BJ (cell line): ENCODE measurements at regions of chr5 and their contacts with region 1.

Region 1: DNA sequence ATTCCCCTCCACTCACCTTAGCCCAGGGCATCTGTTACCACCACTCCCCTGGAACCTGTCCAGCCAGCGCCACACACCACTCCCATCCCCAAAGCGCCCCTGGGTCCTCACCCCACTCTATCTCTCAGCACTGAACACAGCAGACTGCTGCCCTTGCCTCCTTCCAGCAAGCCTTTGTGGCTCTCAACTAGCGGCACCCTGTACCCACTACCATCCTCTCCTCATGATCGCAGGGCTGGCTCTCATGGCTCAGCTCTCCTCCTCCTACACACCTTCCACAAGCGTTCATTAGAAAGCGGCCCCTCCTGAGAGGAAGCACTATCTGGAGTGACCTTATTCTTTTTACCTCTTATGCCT is 13.3 kb upstream of the BASP1 start:
- DNase-seq: no peak
- H3K4me3 ChIP-seq: no peak overlapping the region
- H3K27me3 ChIP-seq: no peaks in the 10 kb centered on the region
- CTCF ChIP-seq: no peak

Region 2: DNA sequence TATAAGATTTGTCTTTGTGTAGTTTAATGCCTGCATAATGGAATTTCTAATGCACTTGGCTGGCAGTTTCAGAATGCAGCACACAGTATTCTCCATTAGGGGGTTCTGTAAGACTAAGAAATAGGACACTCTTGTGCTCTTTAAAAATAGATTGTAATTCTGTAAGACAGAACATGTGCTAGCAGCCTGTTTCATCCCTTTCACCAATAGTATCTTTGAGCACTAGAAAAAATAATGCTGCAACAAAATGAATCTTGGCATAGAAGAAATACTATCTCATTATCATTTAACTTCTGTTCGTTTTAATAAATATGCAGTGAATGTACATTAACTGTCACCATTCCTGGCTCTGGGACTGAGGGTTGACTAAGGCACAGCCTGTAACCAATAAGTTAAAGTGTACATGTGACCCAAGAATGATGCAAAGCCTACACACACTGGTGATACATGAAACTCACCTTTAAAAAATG is 714.8 kb before region 1 on chr5:
- CTCF ChIA-PET with region 1: interaction called, 21 read pairs
- POLR2A ChIA-PET with region 1: no interaction called
- DNase-seq: no peak
- H3K4me3 ChIP-seq: no peak overlapping the region
- H3K27me3 ChIP-seq: peaks cover 2% of the 10 kb centered on the region
- CTCF ChIP-seq: peak; percentile 67

Region 3: DNA sequence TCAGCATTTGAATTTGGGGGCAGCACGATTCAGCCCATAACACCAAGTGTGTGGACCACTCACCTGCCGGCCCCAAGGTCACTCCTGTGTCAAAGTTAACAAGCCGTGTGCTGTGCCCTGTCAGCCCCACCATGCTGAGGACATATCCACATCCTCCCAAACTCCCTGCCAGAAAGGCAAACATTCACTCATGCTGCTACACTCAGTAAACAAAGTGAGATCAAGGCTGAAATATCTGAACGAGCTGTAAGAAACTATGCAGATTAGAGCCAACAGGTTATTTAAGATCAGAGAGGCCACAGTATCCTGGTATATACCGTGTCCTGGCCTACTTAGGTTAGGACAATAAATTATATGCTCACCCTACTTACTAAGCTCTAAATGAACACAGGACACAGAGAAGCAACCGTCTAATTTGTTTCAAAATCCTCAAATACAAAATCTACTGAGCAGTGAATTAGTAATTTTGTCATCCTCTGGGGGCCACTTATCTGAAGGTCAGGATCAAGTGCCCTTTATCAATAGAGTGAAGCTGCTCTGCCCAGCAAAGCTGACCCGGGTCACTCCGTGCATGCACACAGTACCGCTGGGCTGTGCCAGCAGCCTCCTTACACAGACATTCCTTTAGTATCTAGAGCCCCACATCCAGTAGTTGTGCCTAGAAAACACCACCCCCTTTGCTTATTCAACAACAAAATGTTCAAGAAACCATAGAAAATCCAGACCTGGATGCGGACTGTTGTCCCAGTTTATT is 615.5 kb before region 1 on chr5:
- CTCF ChIA-PET with region 1: no interaction called
- POLR2A ChIA-PET with region 1: no interaction called
- DNase-seq: no peak
- H3K4me3 ChIP-seq: no peak overlapping the region
- H3K27me3 ChIP-seq: 0 out of 2 replicates have a peak, but pooled peaks cover 1% of the 10 kb centered on the region
- CTCF ChIP-seq: no peak

Region 4: DNA sequence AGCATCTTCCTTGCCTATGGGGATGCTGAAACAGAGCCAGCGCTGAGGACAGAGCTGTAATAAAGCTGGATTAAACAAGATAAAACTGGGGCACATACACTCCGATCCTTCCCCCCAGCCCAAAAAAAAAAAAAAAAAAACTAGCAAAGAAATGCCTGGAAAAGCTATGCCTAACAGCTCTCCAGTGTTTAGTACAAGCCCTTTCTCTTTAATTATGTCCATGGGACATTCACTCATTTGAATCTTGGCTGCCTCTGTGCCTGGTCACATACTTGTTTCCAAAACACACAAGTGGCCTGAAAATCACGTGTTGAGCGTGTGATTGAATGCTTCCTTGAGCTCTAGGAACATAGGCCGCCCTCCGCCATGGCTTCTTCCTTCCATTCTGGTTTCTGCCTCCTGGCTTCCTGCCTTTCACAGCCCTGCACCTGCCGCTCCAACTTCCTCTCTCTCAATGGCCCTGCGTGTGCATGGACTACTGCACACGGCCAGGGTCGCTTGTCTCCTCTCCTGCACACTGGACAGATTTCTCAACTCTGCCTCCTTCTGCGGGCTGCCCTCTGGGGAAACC is 476.3 kb before region 1 on chr5:
- CTCF ChIA-PET with region 1: no interaction called
- POLR2A ChIA-PET with region 1: no interaction called
- DNase-seq: no peak
- H3K4me3 ChIP-seq: no peak overlapping the region
- H3K27me3 ChIP-seq: no peaks in the 10 kb centered on the region
- CTCF ChIP-seq: no peak